ENCODE measurements at regions of chr10 and their contacts with region 1.

Region 1: DNA sequence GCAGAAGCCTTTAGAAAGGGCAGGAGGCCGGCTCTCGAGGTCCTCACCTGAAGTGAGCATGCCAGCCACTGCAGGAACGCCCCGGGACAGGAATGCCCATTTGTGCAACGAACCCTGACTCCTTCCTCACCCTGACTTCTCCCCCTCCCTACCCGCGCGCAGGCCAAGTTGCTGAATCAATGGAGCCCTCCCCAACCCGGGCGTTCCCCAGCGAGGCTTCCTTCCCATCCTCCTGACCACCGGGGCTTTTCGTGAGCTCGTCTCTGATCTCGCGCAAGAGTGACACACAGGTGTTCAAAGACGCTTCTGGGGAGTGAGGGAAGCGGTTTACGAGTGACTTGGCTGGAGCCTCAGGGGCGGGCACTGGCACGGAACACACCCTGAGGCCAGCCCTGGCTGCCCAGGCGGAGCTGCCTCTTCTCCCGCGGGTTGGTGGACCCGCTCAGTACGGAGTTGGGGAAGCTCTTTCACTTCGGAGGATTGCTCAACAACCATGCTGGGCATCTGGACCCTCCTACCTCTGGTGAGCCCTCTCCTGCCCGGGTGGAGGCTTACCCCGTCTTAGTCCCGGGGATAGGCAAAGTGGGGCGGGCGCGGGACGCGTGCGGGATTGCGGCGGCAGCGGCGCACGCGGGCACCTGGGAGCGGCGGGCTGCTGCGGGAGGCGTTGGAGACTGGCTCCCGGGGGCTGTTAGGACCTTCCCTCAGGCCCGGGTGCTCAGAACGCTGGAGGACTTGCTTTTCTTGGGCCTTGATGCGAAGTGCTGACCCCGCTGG is at the start of gene FAS:
- DNase-seq: peak; percentile 79
- CTCF ChIP-seq: no peak

Region 2: DNA sequence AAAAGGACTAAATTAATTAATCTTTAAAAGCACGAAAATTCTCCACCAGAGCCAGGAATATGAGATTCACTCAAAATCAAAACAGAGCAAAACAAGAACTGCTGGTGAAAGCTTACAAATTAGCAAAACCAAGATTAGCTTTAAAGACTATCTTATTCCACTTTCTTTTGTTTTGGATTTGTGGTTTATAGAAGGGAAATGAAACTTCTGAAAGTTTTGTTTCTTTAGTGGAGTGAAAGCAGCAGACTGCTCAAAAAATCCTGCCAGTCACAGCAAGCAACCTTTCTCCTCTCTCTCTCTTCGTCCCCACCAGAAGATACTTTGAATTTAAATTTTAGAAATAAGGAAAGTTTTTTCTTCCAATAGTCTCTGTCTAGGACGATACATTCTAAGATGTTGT is 45.8 kb before region 1 on chr10:
- CTCF ChIA-PET with region 1: interaction called, 20 read pairs
- POLR2A ChIA-PET with region 1: no interaction called
- DNase-seq: peak; percentile 35
- CTCF ChIP-seq: no peak

Region 3: DNA sequence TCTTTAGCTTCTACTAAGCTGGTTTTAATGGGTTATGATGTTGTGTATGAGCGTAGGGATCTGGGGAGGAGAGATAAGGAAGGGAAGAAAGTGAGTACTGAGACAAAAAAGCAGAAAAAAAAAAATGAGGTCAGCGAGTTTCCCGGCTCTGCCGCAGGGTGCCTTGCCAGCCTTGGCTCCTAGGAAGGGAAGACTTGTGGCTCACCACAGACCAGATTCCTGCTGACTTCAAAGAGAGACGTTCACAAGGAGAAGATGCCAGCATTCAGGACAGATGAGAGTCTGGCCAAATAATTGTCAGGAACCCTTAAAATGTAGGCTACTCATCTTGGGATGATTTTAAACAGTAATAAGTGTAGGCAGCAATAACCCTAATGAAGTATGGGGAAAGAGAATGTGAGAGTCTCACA is 11.4 kb before region 1 on chr10:
- CTCF ChIA-PET with region 1: interaction called, 50 read pairs
- POLR2A ChIA-PET with region 1: no interaction called
- DNase-seq: no peak
- CTCF ChIP-seq: no peak

Region 4: GRCh38 chr10:89062861-89063260 is 72.3 kb after region 1 on chr10:
- CTCF ChIA-PET with region 1: no interaction called
- POLR2A ChIA-PET with region 1: no interaction called
- DNase-seq: no peak
- CTCF ChIP-seq: no peak

Region 5: GRCh38 chr10:89151857-89152256 is 161.3 kb after region 1 on chr10:
- CTCF ChIA-PET with region 1: no interaction called
- POLR2A ChIA-PET with region 1: no interaction called
- DNase-seq: no peak
- CTCF ChIP-seq: no peak

Region 6: DNA sequence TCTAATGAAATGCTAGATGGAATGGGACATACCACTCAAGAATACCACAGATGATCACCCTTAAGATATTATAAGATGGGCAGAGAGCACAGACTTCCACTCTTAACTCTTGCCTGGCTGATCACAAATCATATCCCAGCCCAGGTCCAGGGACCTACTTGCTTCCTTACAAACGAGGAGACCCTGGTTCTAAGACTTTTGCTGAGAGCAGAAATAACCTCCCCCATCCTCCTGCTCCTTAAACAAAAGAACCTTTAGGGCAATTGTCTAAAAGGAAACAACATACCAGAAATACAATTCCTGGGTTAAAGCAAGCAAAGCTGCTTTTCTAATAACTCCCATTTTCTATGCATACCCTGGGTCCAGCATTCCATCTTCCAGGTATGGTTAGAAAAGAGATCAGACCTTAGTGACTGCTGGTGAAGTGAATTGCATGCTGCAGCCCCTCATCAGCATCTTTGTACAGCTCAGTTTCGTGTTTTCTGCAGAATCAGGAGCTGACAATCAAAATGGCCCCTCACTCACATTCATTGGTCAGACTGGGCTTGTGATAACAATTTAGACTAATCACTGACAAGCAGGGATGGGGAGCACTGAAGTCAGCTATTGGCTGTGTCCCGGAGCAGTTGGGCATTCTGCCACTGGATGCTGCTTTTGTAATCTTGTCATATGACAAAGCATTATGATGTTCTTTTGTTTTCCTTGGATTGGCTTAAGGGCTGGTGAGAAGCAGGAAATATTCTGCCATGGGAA is 351.8 kb after region 1 on chr10:
- CTCF ChIA-PET with region 1: no interaction called
- POLR2A ChIA-PET with region 1: no interaction called
- DNase-seq: no peak
- CTCF ChIP-seq: no peak

Measured in GM10248 (cell line).